ENCODE measurements at regions of chr1 and their contacts with region 1.

Region 1: DNA sequence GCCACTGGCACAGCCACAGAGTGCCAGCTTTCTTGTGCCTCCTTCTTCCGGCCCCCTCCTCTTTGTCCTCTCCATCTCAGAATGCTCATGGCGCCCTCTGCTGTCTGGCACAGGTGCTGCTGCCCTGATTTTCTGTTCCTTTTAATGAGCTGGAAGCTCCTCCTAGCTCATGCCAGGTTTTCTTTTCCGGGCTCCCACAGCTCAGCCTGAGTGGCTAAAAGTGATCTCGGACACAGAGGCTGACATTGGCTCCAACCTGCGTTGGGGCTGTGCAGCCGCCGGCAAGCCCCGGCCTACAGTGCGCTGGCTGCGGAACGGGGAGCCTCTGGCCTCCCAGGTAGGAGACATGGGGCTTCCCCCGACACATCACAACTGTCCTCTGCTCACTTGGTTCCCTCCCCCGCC is 18.7 kb downstream of the CNTN2 start:
- DNase-seq: peak; percentile 20
- ATAC-seq: peak; percentile 92
- H3K4me3 ChIP-seq: no peak overlapping the region
- H3K27ac ChIP-seq: no peak overlapping the region
- H3K4me1 ChIP-seq: no peaks in the 10 kb centered on the region
- H3K27me3 ChIP-seq: no peaks in the 10 kb centered on the region
- CTCF ChIP-seq: peak; percentile 84 to 93 (median 92); a peak in 5 of 6 replicates
- EP300 ChIP-seq: no peak
- POLR2A ChIP-seq: no peak
- RAD21 ChIP-seq: peak; percentile 75

Region 2: DNA sequence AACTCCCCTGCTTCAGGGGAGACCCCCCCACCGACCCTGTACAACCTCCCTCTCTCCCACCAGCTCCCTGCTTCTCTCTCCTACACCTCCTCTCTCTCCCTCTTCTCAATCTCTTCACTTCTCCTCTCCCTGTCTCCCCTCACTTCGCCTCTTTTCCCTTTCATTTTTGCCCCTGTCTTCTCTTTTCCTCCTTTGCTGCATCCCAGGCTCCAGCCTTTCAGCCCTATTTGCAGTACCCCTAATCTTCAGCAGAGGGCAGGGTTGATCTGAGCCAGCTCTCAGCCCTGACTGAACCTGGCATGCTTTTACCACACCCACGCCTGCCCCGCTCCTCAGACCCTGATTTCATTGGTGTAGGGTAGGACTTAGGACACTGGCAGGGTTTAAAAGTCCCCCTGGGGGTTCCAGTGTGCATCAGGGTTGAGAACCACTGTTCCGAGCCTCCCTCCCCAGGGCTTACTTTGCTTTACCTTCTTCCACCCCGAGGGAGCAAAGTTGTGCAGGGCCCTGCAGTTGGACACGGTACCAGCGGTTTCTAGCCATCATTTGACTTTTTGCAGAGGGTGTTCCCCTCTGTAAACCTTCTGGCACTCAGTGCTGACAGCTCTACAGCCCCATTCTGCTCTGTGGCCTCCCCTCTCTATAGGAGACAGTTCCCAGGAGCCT is 86.0 kb before region 1 on chr1:
- CTCF ChIA-PET with region 1: interaction called, 119 read pairs
- POLR2A ChIA-PET with region 1: interaction called, 3 read pairs
- RAD21 ChIA-PET with region 1: interaction called, 47 read pairs
- SMC1A ChIA-PET with region 1: interaction called, 35 read pairs
- in situ Hi-C with region 1: loop called (anchors 5 kb)
- intact Hi-C with region 1: no loop called
- DNase-seq: no peak
- ATAC-seq: peak; percentile 90
- H3K4me3 ChIP-seq: no peak overlapping the region
- H3K27ac ChIP-seq: no peak overlapping the region
- H3K4me1 ChIP-seq: peaks cover 6% of the 10 kb centered on the region
- H3K27me3 ChIP-seq: peaks cover 0 to 5% of the 10 kb centered on the region in 2 experiments; a peak in 3 of 4 replicates
- CTCF ChIP-seq: peak; percentile 84 to 89 (median 88)
- EP300 ChIP-seq: no peak
- POLR2A ChIP-seq: no peak
- RAD21 ChIP-seq: peak; percentile 79

Region 3: GRCh38 chr1:204997591-204998355 is 63.9 kb before region 1 on chr1:
- CTCF ChIA-PET with region 1: interaction called, 151 read pairs
- POLR2A ChIA-PET with region 1: no interaction called
- RAD21 ChIA-PET with region 1: interaction called, 6 read pairs
- SMC1A ChIA-PET with region 1: interaction called, 10 read pairs
- in situ Hi-C with region 1: no loop called
- intact Hi-C with region 1: no loop called
- DNase-seq: no peak
- ATAC-seq: 0 out of 3 replicates have a peak, but pooled peaks have one; percentile 28
- H3K4me3 ChIP-seq: no peak overlapping the region
- H3K27ac ChIP-seq: no peak overlapping the region
- H3K4me1 ChIP-seq: no peaks in the 10 kb centered on the region
- H3K27me3 ChIP-seq: peaks cover 2% of the 10 kb centered on the region in 2 experiments
- CTCF ChIP-seq: no peak
- EP300 ChIP-seq: no peak
- POLR2A ChIP-seq: no peak
- RAD21 ChIP-seq: no peak

Region 4: GRCh38 chr1:205042911-205043806 is 18.5 kb before region 1 on chr1 and contains the start of gene CNTN2:
- CTCF ChIA-PET with region 1: interaction called, 35 read pairs
- POLR2A ChIA-PET with region 1: no interaction called
- RAD21 ChIA-PET with region 1: interaction called, 3 read pairs
- SMC1A ChIA-PET with region 1: no interaction called
- in situ Hi-C with region 1: no loop called
- intact Hi-C with region 1: no loop called
- DNase-seq: no peak
- ATAC-seq: no peak
- H3K4me3 ChIP-seq: no peak within 1 kb of the TSS
- H3K27ac ChIP-seq: no peak within 1 kb of the TSS
- H3K4me1 ChIP-seq: no peaks in the 10 kb centered on the region
- H3K27me3 ChIP-seq: peaks cover 0 to 15% of the 10 kb centered on the region in 2 experiments
- CTCF ChIP-seq: no peak
- EP300 ChIP-seq: no peak
- POLR2A ChIP-seq: no peak
- RAD21 ChIP-seq: no peak
- polyA plus RNA-seq, gene CNTN2: not detected

Region 5: DNA sequence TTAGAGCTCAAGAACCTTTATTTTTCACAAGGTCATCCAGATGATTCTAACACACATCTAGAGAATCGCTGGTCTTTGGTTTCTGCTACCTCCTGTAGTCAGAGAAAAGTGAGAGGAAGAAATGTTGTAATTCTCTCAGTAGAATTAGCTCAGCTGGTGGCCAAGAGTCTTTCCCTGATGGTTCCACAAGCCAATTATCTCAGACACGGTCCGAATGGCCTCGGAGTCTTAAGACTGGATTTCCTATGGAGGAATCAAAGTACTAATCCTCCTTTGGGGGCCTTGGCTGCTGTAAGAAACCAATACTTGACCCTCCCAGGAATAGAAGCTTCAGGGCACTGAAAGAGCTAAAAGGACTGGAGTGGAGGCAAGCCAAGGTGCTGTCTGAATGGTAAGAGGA is 20.8 kb after region 1 on chr1:
- CTCF ChIA-PET with region 1: interaction called, 65 read pairs
- POLR2A ChIA-PET with region 1: no interaction called
- RAD21 ChIA-PET with region 1: no interaction called
- SMC1A ChIA-PET with region 1: interaction called, 6 read pairs
- in situ Hi-C with region 1: no loop called
- intact Hi-C with region 1: no loop called
- DNase-seq: no peak
- ATAC-seq: no peak
- H3K4me3 ChIP-seq: no peak overlapping the region
- H3K27ac ChIP-seq: no peak overlapping the region
- H3K4me1 ChIP-seq: no peaks in the 10 kb centered on the region
- H3K27me3 ChIP-seq: no peaks in the 10 kb centered on the region
- CTCF ChIP-seq: no peak
- EP300 ChIP-seq: no peak
- POLR2A ChIP-seq: no peak
- RAD21 ChIP-seq: no peak

Region 6: GRCh38 chr1:205141236-205142101 is 79.8 kb after region 1 on chr1:
- CTCF ChIA-PET with region 1: interaction called, 41 read pairs
- POLR2A ChIA-PET with region 1: no interaction called
- RAD21 ChIA-PET with region 1: interaction called, 26 read pairs
- SMC1A ChIA-PET with region 1: interaction called, 28 read pairs
- in situ Hi-C with region 1: no loop called
- intact Hi-C with region 1: no loop called
- DNase-seq: peak; percentile 30
- ATAC-seq: peak; percentile 97
- H3K4me3 ChIP-seq: no peak overlapping the region
- H3K27ac ChIP-seq: no peak overlapping the region
- H3K4me1 ChIP-seq: peaks cover 4% of the 10 kb centered on the region; the same call in 1 of the 2 replicates
- H3K27me3 ChIP-seq: no peaks in the 10 kb centered on the region
- CTCF ChIP-seq: peak; percentile 70 to 79 (median 72)
- EP300 ChIP-seq: no peak
- POLR2A ChIP-seq: no peak
- RAD21 ChIP-seq: peak; percentile 59

Region 7: DNA sequence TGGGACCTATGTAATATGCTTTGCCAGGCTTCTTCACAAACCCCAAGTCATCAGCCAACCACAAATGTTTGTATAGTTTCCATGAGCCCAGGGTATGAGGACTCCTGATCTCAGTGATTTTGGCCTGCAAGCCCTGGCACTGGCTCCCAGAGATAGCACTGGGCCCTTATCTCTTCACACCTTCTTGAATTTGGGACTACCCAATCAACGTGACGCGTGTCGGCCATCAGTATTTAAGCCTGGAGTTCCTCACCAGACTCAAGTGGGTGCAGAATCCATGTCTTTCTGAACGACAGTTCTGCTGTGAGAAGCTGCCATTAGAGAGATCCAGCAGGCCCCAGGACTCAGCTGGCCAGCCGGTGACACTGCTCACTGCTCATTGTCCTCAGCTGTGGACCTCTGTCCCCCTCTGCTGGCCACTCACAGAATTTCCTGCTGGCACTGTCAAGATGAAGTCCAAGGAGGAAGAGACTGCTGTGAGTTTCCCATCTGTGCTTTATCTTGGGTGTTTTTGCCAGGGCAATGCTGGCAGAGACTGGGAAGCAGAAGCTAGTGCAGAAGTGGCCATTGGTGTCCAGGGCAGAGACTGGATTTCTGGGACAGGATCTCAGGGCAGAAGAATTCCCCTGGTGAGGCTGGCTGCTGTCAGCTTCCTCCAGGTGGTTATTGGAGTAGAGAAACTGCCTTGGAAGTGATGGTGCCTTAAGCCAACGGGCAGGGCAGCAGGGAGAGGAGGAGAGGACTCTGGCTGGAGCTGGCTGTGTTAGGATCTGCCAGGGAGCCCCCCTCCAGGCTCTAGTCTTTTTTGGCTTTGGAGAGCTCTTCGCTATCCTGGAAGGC is 194.5 kb after region 1 on chr1:
- CTCF ChIA-PET with region 1: interaction called, 122 read pairs
- POLR2A ChIA-PET with region 1: interaction called, 3 read pairs
- RAD21 ChIA-PET with region 1: interaction called, 28 read pairs
- SMC1A ChIA-PET with region 1: interaction called, 31 read pairs
- in situ Hi-C with region 1: no loop called
- intact Hi-C with region 1: loop called (anchors 2 kb)
- DNase-seq: no peak
- ATAC-seq: peak; percentile 98
- H3K4me3 ChIP-seq: no peak overlapping the region
- H3K27ac ChIP-seq: no peak overlapping the region
- H3K4me1 ChIP-seq: no peaks in the 10 kb centered on the region
- H3K27me3 ChIP-seq: peaks cover under 1 to 2% of the 10 kb centered on the region in 2 experiments; a peak in 2 of 4 replicates
- CTCF ChIP-seq: peak; percentile 91 to 96 (median 93); a peak in 5 of 6 replicates
- EP300 ChIP-seq: no peak
- POLR2A ChIP-seq: no peak
- RAD21 ChIP-seq: peak; percentile 99